Colonic mucosa (tissue), 4 donors: ENCODE measurements at regions of chr5 and their contacts with region 1.

Region 1: GRCh38 chr5:169980418-169981053 is at the start of gene INSYN2B:
- DNase-seq: peak; percentile 51
- H3K4me3 ChIP-seq: no peak within 1 kb of the TSS
- H3K27ac ChIP-seq: no peak within 1 kb of the TSS
- H3K4me1 ChIP-seq: no peaks in the 10 kb centered on the region
- H3K27me3 ChIP-seq: no peaks in the 10 kb centered on the region
- CTCF ChIP-seq: peak; percentile 35
- total RNA-seq, gene INSYN2B: not detected

Region 2: GRCh38 chr5:169695919-169696490 is 284.5 kb before region 1 on chr5:
- intact Hi-C with region 1: loop called (anchors 5 kb)
- DNase-seq: no peak
- H3K4me3 ChIP-seq: no peak overlapping the region
- H3K27ac ChIP-seq: no peak overlapping the region
- H3K4me1 ChIP-seq: no peaks in the 10 kb centered on the region
- H3K27me3 ChIP-seq: no peaks in the 10 kb centered on the region
- CTCF ChIP-seq: no peak

Region 3: DNA sequence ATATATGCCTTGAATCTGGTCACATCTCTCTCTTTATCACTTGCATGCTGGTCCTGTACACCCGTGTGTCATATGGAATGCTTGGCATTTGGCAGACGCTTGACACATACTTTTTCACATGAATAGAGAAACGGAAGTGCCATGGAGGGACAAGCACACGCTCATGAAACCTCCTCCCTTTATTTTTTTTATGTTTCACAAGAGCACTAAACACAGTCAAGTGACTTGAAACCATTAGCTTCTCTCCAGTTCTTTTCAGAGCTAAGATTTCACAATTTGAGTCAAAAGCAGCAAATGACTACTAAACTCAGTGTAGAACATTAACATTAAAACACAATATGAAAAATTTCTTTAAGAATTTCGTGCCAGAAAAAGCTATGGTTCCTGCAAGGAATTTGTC is 192.4 kb before region 1 on chr5:
- intact Hi-C with region 1: no loop called
- DNase-seq: no peak
- H3K4me3 ChIP-seq: no peak overlapping the region
- H3K27ac ChIP-seq: no peak overlapping the region
- H3K4me1 ChIP-seq: no peaks in the 10 kb centered on the region
- H3K27me3 ChIP-seq: no peaks in the 10 kb centered on the region
- CTCF ChIP-seq: no peak

Region 4: DNA sequence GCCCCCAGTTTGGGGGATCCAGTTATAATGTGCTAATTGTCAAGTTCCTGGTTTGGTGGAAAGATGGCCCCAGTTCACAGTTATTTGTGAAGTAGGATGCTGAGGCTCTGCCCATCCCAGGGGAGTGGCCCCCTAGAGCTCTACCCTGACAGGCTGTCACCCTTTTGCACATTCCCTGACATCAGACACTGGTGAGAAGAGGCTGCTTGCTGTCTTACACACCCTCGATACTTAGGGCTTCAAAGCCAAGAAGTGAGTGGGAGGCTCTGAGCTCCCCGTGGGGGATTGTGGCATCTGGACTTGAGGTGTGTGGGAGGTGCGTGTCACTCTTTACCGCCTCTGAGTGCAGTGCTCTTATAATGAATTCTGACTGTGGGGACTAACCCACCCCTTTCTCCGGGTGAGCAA is 175.0 kb before region 1 on chr5:
- intact Hi-C with region 1: no loop called
- DNase-seq: no peak
- H3K4me3 ChIP-seq: no peak overlapping the region
- H3K27ac ChIP-seq: no peak overlapping the region
- H3K4me1 ChIP-seq: no peaks in the 10 kb centered on the region
- H3K27me3 ChIP-seq: no peaks in the 10 kb centered on the region
- CTCF ChIP-seq: no peak